ENCODE measurements at regions of chr12 and their contacts with region 1.

Region 1: GRCh38 chr12:15688202-15688736 is 100.9 kb downstream of the EPS8 start:
- DNase-seq: peak; percentile 93
- ATAC-seq: peak; percentile 86
- H3K4me3 ChIP-seq: peak overlapping the region; percentile 52 to 56
- H3K27ac ChIP-seq: peak overlapping the region; percentile 79
- H3K4me1 ChIP-seq: peaks cover 81 to 99% of the 10 kb centered on the region in 2 experiments
- H3K27me3 ChIP-seq: no peaks in the 10 kb centered on the region
- CTCF ChIP-seq: no peak
- POLR2A ChIP-seq: no peak
- RAD21 ChIP-seq: peak; percentile 15

Region 2: GRCh38 chr12:15590180-15590826 is 98.0 kb before region 1 on chr12:
- CTCF ChIA-PET with region 1: no interaction called
- POLR2A ChIA-PET with region 1: interaction called, 5 read pairs
- RAD21 ChIA-PET with region 1: no interaction called
- intact Hi-C with region 1: loop called (anchors 5 kb)
- DNase-seq: peak; percentile 60
- ATAC-seq: peak; percentile 87
- H3K4me3 ChIP-seq: peak overlapping the region; percentile 13 to 36; a peak in 2 of 4 replicates
- H3K27ac ChIP-seq: no peak overlapping the region
- H3K4me1 ChIP-seq: peaks cover 3 to 10% of the 10 kb centered on the region in 2 experiments; a peak in 3 of 4 replicates
- H3K27me3 ChIP-seq: no peaks in the 10 kb centered on the region
- CTCF ChIP-seq: peak; percentile 76 to 87 (median 86)
- POLR2A ChIP-seq: no peak
- RAD21 ChIP-seq: peak; percentile 98

Region 3: DNA sequence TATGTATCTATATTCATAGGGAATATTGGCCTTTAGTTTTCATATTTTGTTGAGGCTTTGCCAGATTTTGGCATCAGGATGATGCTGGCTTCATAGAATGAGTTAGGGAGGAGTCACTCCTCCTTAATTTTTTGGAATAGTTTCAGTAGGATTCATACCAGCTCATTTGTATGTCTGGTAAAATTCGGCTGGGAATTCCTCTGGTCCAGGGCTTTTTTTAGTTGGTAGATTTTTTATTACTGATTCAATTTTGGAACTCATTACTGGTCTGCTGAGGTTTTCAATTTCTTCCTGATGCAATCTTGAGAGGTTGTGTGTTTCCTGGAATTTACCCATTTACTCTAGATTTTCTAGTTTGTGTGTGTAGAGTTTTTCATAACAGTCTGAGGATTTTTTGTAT is 74.3 kb before region 1 on chr12:
- CTCF ChIA-PET with region 1: no interaction called
- POLR2A ChIA-PET with region 1: no interaction called
- RAD21 ChIA-PET with region 1: no interaction called
- intact Hi-C with region 1: no loop called
- DNase-seq: no peak
- ATAC-seq: no peak
- H3K4me3 ChIP-seq: no peak overlapping the region
- H3K27ac ChIP-seq: no peak overlapping the region
- H3K4me1 ChIP-seq: no peaks in the 10 kb centered on the region
- H3K27me3 ChIP-seq: no peaks in the 10 kb centered on the region
- CTCF ChIP-seq: no peak
- POLR2A ChIP-seq: no peak
- RAD21 ChIP-seq: no peak

Region 4: DNA sequence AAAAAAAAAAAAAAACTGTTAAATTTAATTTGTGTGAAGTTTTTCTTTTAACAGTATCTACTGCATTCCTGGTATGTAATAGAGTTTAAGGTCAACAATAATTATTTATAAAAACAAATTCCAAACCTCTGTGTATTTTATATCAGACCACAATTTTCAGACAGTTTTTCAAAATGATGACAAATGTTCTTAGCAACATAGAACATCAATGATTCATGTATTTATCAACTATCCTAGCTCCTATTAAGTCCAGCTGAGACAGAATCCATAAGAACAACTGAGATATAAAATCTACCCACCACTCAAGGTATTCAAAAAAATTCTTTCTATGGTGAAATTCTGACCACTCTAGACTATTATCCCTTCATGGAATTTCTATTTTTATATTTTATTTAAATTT is 43.6 kb before region 1 on chr12:
- CTCF ChIA-PET with region 1: no interaction called
- POLR2A ChIA-PET with region 1: no interaction called
- RAD21 ChIA-PET with region 1: no interaction called
- intact Hi-C with region 1: no loop called
- DNase-seq: no peak
- ATAC-seq: no peak
- H3K4me3 ChIP-seq: no peak overlapping the region
- H3K27ac ChIP-seq: no peak overlapping the region
- H3K4me1 ChIP-seq: no peaks in the 10 kb centered on the region
- H3K27me3 ChIP-seq: no peaks in the 10 kb centered on the region
- CTCF ChIP-seq: no peak
- POLR2A ChIP-seq: no peak
- RAD21 ChIP-seq: no peak

Region 5: DNA sequence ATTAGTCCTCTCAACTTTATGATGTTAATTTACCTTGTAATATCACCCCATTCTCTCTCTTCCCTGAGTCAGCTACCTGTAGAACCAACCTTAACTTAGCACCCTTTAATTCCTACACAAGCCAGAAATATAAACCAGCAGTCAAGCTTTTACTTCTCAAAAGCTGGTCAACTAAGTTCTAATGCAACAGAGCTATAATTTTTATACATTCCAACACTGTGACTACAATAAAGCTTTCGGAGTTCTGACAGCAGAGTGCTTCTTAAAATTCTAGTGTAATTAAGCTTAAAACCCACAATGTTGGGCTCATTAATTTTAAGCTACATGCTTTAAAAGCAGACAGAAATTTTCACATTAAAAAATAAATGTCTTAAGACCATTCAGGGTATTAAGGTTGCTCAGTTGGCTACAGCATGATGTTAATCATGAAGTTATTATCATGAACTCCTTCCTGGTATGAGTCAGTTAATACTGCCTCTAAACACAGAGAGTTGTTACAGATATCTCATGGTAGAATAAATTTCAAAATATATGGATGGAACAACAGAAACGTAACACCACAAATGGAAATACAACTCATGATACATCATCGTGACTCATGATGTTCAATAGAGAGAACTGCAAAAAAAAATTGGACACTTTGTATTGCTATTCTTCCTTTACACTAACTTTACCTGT is 25.8 kb before region 1 on chr12:
- CTCF ChIA-PET with region 1: no interaction called
- POLR2A ChIA-PET with region 1: interaction called, 25 read pairs
- RAD21 ChIA-PET with region 1: no interaction called
- intact Hi-C with region 1: no loop called
- DNase-seq: peak; percentile 86
- ATAC-seq: peak; percentile 85
- H3K4me3 ChIP-seq: peak overlapping the region in 1 of 2 experiments; percentile 6; a peak in 1 of 4 replicates
- H3K27ac ChIP-seq: peak overlapping the region; percentile 84
- H3K4me1 ChIP-seq: peaks cover 11 to 31% of the 10 kb centered on the region in 2 experiments
- H3K27me3 ChIP-seq: no peaks in the 10 kb centered on the region
- CTCF ChIP-seq: no peak
- POLR2A ChIP-seq: no peak
- RAD21 ChIP-seq: peak; percentile 23; the same call in 1 of the 2 replicates

Region 6: GRCh38 chr12:15672671-15673270 is 15.5 kb before region 1 on chr12:
- CTCF ChIA-PET with region 1: no interaction called
- POLR2A ChIA-PET with region 1: interaction called, 12 read pairs
- RAD21 ChIA-PET with region 1: no interaction called
- intact Hi-C with region 1: no loop called
- DNase-seq: no peak
- ATAC-seq: no peak
- H3K4me3 ChIP-seq: no peak overlapping the region
- H3K27ac ChIP-seq: no peak overlapping the region
- H3K4me1 ChIP-seq: peaks cover 0 to 3% of the 10 kb centered on the region in 2 experiments; a peak in 1 of 4 replicates
- H3K27me3 ChIP-seq: no peaks in the 10 kb centered on the region
- CTCF ChIP-seq: no peak
- POLR2A ChIP-seq: no peak
- RAD21 ChIP-seq: no peak

Region 7: GRCh38 chr12:15698377-15698871 is 10.2 kb after region 1 on chr12:
- CTCF ChIA-PET with region 1: no interaction called
- POLR2A ChIA-PET with region 1: interaction called, 32 read pairs
- RAD21 ChIA-PET with region 1: no interaction called
- intact Hi-C with region 1: no loop called
- DNase-seq: no peak
- ATAC-seq: no peak
- H3K4me3 ChIP-seq: no peak overlapping the region
- H3K27ac ChIP-seq: peak overlapping the region; percentile 96; the same call in 1 of the 2 replicates
- H3K4me1 ChIP-seq: peaks cover 62 to 72% of the 10 kb centered on the region in 2 experiments
- H3K27me3 ChIP-seq: no peaks in the 10 kb centered on the region
- CTCF ChIP-seq: no peak
- POLR2A ChIP-seq: no peak
- RAD21 ChIP-seq: no peak

Region 8: DNA sequence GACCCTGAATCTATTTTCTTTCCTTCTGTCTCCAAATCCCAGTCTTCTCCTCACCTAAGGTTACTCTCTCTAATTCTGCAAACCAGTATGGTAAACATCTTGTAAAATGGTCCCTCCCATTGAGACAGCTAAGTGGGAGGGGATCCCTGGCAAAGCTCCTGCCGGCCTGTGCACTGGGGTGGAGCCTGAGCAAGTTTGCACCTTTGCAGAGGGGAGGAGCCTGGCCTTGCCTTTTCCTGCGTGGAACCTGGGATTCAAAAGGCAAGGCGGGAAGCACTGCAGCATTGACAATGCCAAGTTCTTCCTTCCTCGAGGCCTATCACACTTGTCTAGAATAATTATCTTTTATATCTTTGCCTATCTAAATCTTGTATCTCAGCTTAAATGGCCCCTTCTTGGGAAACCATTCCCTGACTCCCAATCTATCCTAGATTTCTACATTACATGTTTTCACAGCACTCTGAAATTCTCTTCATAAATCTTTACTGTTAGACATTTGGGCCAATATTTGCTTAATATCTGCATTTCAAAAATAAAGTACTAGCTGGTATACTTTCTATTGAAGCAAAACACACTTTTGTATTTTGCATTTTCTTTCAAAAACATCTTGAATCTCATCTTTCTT is 17.9 kb after region 1 on chr12:
- CTCF ChIA-PET with region 1: no interaction called
- POLR2A ChIA-PET with region 1: interaction called, 25 read pairs
- RAD21 ChIA-PET with region 1: no interaction called
- intact Hi-C with region 1: no loop called
- DNase-seq: no peak
- ATAC-seq: peak; percentile 79
- H3K4me3 ChIP-seq: no peak overlapping the region
- H3K27ac ChIP-seq: no peak overlapping the region
- H3K4me1 ChIP-seq: peaks cover 59 to 74% of the 10 kb centered on the region in 2 experiments
- H3K27me3 ChIP-seq: no peaks in the 10 kb centered on the region
- CTCF ChIP-seq: no peak
- POLR2A ChIP-seq: no peak
- RAD21 ChIP-seq: no peak

Region 9: GRCh38 chr12:15789220-15790171 is 101.2 kb after region 1 on chr12 and contains the start of gene EPS8:
- CTCF ChIA-PET with region 1: no interaction called
- POLR2A ChIA-PET with region 1: interaction called, 8 read pairs
- RAD21 ChIA-PET with region 1: no interaction called
- intact Hi-C with region 1: loop called (anchors 2 kb)
- DNase-seq: peak; percentile 74
- ATAC-seq: peak; percentile 83
- H3K4me3 ChIP-seq: peak within 1 kb of the TSS; percentile 78 to 79
- H3K27ac ChIP-seq: peak within 1 kb of the TSS; percentile 90
- H3K4me1 ChIP-seq: peaks cover 14 to 18% of the 10 kb centered on the region in 2 experiments
- H3K27me3 ChIP-seq: no peaks in the 10 kb centered on the region
- CTCF ChIP-seq: no peak
- POLR2A ChIP-seq: peak; percentile 42
- RAD21 ChIP-seq: peak; percentile 25; the same call in 1 of the 2 replicates
- total RNA-seq, gene EPS8: 49.9 TPM

Region 10: DNA sequence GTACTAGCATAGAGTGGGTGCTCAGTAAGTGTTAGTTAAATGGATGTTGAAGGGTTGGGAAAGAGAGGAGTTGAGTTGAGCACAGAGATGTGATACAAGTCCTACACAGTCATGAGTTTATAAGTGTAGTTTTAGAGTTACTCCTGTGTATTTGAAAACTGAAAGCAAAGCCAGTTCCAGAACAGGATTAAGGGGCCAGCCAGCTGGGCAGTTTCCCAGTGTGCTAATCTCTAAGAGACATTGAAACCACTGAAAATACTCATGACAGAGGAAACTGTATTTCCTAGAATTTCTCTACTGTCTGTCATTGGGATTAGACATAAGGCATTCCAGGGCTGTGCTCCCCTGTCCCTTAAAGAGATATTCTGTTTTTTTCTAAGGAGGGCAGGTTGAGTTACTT is 323.8 kb after region 1 on chr12:
- CTCF ChIA-PET with region 1: no interaction called
- POLR2A ChIA-PET with region 1: no interaction called
- RAD21 ChIA-PET with region 1: no interaction called
- intact Hi-C with region 1: no loop called
- DNase-seq: no peak
- ATAC-seq: no peak
- H3K4me3 ChIP-seq: no peak overlapping the region
- H3K27ac ChIP-seq: no peak overlapping the region
- H3K4me1 ChIP-seq: no peaks in the 10 kb centered on the region
- H3K27me3 ChIP-seq: no peaks in the 10 kb centered on the region
- CTCF ChIP-seq: no peak
- POLR2A ChIP-seq: no peak
- RAD21 ChIP-seq: no peak

Measured in HCT116 (cell line).